Left ventricle myocardium inferior (tissue), 1 donor: ENCODE measurements at regions of chr20 and their contacts with region 1.

Region 1: DNA sequence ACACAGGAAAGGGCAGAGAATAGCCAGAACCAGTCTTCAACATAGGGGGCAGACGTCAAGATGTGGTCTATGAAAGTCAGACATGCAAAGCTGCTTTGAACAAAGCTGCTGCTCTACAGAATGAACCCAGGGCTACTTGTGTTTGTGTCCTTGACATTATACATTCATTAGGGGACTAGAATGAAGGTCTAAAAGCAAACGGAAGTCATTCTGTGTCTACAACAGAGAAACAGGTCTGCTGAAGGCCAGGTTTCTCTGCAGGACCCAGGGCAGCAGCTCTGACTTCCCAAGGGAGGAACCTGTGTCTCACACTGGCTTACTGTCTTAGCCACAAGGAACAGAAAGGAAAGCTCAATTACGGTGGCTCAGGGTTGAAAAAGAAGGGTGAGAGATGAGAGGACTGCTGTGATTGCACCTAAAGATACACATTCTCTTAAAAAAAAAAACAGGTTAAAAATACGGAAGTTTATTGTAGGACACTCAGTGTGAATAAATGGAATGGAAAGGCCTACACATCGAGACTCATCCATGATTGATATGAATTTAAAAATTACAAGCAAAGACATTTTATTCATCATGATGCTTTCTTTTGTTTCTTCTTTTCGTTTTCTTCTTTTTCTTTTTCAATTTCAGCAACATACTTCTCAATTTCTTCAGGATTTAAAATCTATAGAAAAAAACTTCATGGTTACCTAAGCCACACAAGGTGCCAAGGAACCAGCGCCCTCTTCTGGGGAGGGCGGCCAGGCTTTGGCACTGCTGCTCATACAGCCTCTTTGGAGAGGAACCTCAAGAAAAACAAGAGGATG is 6.7 kb downstream of the PSMA7 start:
- DNase-seq: peak; percentile 66
- H3K4me3 ChIP-seq: no peak overlapping the region
- H3K27ac ChIP-seq: no peak overlapping the region
- H3K4me1 ChIP-seq: peaks cover 76% of the 10 kb centered on the region
- H3K27me3 ChIP-seq: no peaks in the 10 kb centered on the region
- CTCF ChIP-seq: peak; percentile 82

Region 2: DNA sequence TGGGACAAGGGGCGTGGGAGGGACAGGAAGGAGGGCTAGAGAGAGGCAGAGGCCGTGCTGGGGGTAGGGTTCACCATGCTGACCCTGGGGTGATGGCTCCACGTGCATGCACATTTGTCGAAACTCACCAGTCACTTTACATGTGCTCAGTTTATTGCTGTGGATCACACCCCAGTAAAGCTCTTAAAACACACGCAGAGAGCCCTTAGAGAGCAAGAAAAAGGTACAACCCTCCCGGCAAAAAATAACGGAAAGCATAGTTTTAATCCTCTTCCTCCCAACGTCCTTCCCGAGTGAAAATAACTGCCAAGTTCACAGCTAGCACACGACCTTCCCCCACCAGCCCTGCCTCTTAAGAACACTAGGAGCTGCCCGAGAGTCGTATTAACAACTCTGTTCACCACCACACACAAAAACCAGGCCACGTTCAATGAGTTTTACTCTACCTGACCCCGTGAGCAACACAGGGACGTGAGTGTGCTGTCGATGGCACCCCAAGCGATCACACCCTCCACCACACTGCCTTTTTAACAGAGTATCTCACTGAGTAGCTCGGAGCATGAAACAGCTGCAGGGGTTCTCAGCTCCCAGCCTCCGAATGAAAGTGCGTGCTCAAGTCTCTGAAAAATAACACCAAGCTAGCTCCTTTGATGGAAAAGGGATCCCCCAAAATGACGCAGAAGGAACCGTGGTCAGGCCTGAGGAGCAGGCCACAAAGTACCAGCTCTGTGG is 110.5 kb before region 1 on chr20:
- intact Hi-C with region 1: loop called (anchors 10 kb)
- DNase-seq: no peak
- H3K4me3 ChIP-seq: peak overlapping the region; percentile 19
- H3K27ac ChIP-seq: peak overlapping the region; percentile 61
- H3K4me1 ChIP-seq: peaks cover 60% of the 10 kb centered on the region
- H3K27me3 ChIP-seq: no peaks in the 10 kb centered on the region
- CTCF ChIP-seq: peak; percentile 74